WTC11 (cell line): ENCODE measurements at regions of chr15 and their contacts with region 1.

Region 1: DNA sequence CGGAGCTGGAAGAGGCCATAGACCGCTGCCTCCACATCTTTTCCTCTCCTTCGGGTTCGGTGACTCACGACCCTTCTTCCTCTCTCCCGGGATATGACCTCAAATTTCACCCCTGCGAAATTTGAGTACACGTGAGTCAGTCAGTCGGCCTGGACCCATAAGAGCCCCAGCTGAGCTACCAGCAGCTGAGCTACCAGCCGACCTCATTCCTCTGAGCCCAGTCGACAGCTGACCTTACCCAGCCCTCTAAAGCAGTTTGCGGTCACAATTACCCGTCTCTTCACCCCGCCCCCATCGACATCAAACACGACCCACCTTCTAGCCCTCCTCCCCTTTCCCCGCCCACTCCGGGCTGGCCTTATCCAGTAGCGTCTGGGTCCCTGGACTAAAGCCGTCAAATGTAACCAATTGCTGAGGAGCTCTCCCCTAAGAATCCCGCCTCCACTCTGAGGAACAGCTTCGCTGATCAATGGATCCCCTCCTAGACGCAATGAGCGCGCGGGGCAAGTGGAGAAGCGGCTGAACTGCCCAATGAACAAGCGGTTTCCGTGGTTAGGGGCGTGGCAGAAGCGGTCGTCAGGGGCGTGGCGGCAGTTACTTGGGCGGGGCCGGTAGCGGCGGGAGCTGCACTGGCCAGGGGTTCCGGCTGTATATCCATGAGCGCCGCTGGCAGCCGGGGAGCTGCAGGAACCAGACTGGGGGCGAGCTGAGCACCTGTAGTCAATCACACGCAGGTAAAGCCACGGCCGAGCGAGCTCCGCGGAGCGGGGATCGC is at the start of gene ABHD2:
- DNase-seq: peak; percentile 99
- ATAC-seq: peak; percentile 99
- H3K4me3 Mint-ChIP-seq: no peak within 1 kb of the TSS
- H3K27ac Mint-ChIP-seq: no peak within 1 kb of the TSS
- H3K4me1 Mint-ChIP-seq: peaks cover 36% of the 10 kb centered on the region
- H3K27me3 Mint-ChIP-seq: no peaks in the 10 kb centered on the region
- CTCF ChIP-seq: no peak
- total RNA-seq, gene ABHD2: 26.2 to 29.7 TPM (median 29.5 TPM) in 3 replicates

Region 2: GRCh38 chr15:88878720-88879184 is 209.3 kb before region 1 on chr15:
- CTCF ChIA-PET with region 1: interaction called, 12 read pairs
- POLR2A ChIA-PET with region 1: no interaction called
- DNase-seq: peak; percentile 86
- ATAC-seq: peak; percentile 92
- H3K4me3 Mint-ChIP-seq: no peak overlapping the region
- H3K27ac Mint-ChIP-seq: peak overlapping the region; percentile 85; the same call in 1 of the 2 replicates
- H3K4me1 Mint-ChIP-seq: peaks cover 14% of the 10 kb centered on the region
- H3K27me3 Mint-ChIP-seq: no peaks in the 10 kb centered on the region
- CTCF ChIP-seq: peak; percentile 60

Region 3: GRCh38 chr15:88932271-88932874 is 155.6 kb before region 1 on chr15:
- CTCF ChIA-PET with region 1: no interaction called
- POLR2A ChIA-PET with region 1: no interaction called
- DNase-seq: no peak
- ATAC-seq: no peak
- H3K4me3 Mint-ChIP-seq: no peak overlapping the region
- H3K27ac Mint-ChIP-seq: no peak overlapping the region
- H3K4me1 Mint-ChIP-seq: peaks cover 20% of the 10 kb centered on the region
- H3K27me3 Mint-ChIP-seq: peaks cover 7% of the 10 kb centered on the region
- CTCF ChIP-seq: no peak

Region 4: GRCh38 chr15:89057504-89058133 is 30.4 kb before region 1 on chr15:
- CTCF ChIA-PET with region 1: interaction called, 10 read pairs
- POLR2A ChIA-PET with region 1: interaction called, 4 read pairs
- DNase-seq: peak; percentile 95
- ATAC-seq: peak; percentile 94
- H3K4me3 Mint-ChIP-seq: no peak overlapping the region
- H3K27ac Mint-ChIP-seq: peak overlapping the region; percentile 45
- H3K4me1 Mint-ChIP-seq: peaks cover 11% of the 10 kb centered on the region
- H3K27me3 Mint-ChIP-seq: no peaks in the 10 kb centered on the region
- CTCF ChIP-seq: peak; percentile 100

Region 5: GRCh38 chr15:89101302-89102191 is 13.5 kb after region 1 on chr15:
- CTCF ChIA-PET with region 1: interaction called, 14 read pairs
- POLR2A ChIA-PET with region 1: interaction called, 15 read pairs
- DNase-seq: no peak
- ATAC-seq: no peak
- H3K4me3 Mint-ChIP-seq: no peak overlapping the region
- H3K27ac Mint-ChIP-seq: no peak overlapping the region
- H3K4me1 Mint-ChIP-seq: peaks cover 20% of the 10 kb centered on the region
- H3K27me3 Mint-ChIP-seq: no peaks in the 10 kb centered on the region
- CTCF ChIP-seq: no peak

Region 6: GRCh38 chr15:89112341-89112971 is 24.4 kb after region 1 on chr15:
- CTCF ChIA-PET with region 1: interaction called, 13 read pairs
- POLR2A ChIA-PET with region 1: interaction called, 10 read pairs
- DNase-seq: no peak
- ATAC-seq: no peak
- H3K4me3 Mint-ChIP-seq: no peak overlapping the region
- H3K27ac Mint-ChIP-seq: peak overlapping the region; percentile 54
- H3K4me1 Mint-ChIP-seq: peaks cover 87% of the 10 kb centered on the region
- H3K27me3 Mint-ChIP-seq: no peaks in the 10 kb centered on the region
- CTCF ChIP-seq: no peak

Region 7: GRCh38 chr15:89278307-89278706 is 190.3 kb after region 1 on chr15:
- CTCF ChIA-PET with region 1: no interaction called
- POLR2A ChIA-PET with region 1: no interaction called
- DNase-seq: no peak
- ATAC-seq: no peak
- H3K4me3 Mint-ChIP-seq: no peak overlapping the region
- H3K27ac Mint-ChIP-seq: no peak overlapping the region
- H3K4me1 Mint-ChIP-seq: no peaks in the 10 kb centered on the region
- H3K27me3 Mint-ChIP-seq: no peaks in the 10 kb centered on the region
- CTCF ChIP-seq: no peak